Activated CD8-positive, alpha-beta T cell treated with anti-CD3 and anti-CD28 coated beads, Interleukin-2, amount 10 ng/mL, durations not matched to agents 7 days and 5 days (primary cell): ENCODE measurements at regions of chr2 and their contacts with region 1.

Region 1: DNA sequence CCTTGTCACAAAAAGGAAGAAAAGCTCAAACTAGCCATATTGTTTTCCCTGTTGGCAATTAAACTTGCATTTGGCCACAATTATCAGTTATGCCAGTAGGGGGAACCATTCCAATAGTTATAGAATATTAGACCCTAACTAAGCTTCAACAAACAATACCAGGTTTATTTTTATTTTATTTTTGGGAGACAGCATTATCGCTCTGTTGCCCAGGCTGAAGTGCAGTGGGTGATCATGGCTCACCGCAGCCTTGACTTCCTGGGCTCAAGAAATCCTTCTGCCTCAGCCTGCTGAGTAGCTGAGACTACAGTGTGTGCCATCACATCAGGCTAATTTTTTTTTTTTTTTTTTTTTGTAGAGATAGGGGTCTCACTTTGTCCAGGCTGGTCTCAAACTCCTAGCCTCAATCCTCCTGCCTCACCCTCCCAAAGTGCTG is 102.1 kb downstream of the ATAD2B start:
- DNase-seq: peak; percentile 59
- ATAC-seq: peak; percentile 67
- H3K4me3 Mint-ChIP-seq: no peak overlapping the region
- H3K27ac Mint-ChIP-seq: no peak overlapping the region
- H3K4me1 Mint-ChIP-seq: no peaks in the 10 kb centered on the region
- H3K27me3 Mint-ChIP-seq: no peaks in the 10 kb centered on the region

Region 2: DNA sequence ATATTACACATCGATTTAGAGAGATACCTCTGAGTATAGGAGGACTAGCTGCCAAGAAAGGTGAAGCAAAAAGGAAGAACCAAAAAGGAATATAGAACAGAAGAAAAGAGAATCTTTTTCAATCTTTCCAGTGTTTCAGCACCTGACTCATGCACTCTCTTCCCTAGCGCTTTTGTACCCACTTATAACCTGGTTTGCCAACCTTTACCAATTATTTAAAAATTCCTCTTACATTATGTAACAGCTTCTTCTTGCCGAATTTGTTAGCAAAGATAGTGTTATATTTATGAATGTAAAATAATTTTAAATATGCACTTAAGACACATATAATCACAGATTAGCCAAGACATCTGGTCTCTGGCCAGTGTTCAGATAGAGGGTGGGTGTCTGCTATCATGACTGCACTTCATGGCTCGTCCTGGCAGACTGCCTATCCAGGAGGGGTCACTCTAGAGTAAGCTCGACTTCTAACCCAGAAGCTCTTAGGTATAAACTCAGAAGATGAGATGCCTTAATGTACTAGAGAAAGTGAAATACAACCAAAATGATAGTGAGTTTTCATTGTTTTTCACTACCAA is 20.7 kb before region 1 on chr2:
- CTCF ChIA-PET with region 1: interaction called, 12 read pairs
- POLR2A ChIA-PET with region 1: interaction called, 4 read pairs
- DNase-seq: no peak
- ATAC-seq: no peak
- H3K4me3 Mint-ChIP-seq: no peak overlapping the region
- H3K27ac Mint-ChIP-seq: no peak overlapping the region
- H3K4me1 Mint-ChIP-seq: no peaks in the 10 kb centered on the region
- H3K27me3 Mint-ChIP-seq: no peaks in the 10 kb centered on the region

Region 3: GRCh38 chr2:23835988-23836387 is 11.2 kb after region 1 on chr2:
- CTCF ChIA-PET with region 1: interaction called, 20 read pairs
- POLR2A ChIA-PET with region 1: no interaction called
- DNase-seq: no peak
- ATAC-seq: no peak
- H3K4me3 Mint-ChIP-seq: no peak overlapping the region
- H3K27ac Mint-ChIP-seq: no peak overlapping the region
- H3K4me1 Mint-ChIP-seq: no peaks in the 10 kb centered on the region
- H3K27me3 Mint-ChIP-seq: no peaks in the 10 kb centered on the region

Region 4: GRCh38 chr2:23926750-23927571 is 102.2 kb after region 1 on chr2 and contains the start of gene ATAD2B:
- CTCF ChIA-PET with region 1: interaction called, 83 read pairs
- POLR2A ChIA-PET with region 1: interaction called, 21 read pairs
- DNase-seq: peak; percentile 94
- ATAC-seq: peak; percentile 89
- H3K4me3 Mint-ChIP-seq: peak within 1 kb of the TSS; percentile 98
- H3K27ac Mint-ChIP-seq: peak within 1 kb of the TSS; percentile 99
- H3K4me1 Mint-ChIP-seq: peaks cover 39% of the 10 kb centered on the region
- H3K27me3 Mint-ChIP-seq: no peaks in the 10 kb centered on the region
- total RNA-seq, gene ATAD2B: 28.2 to 32.0 TPM

Region 5: GRCh38 chr2:24084386-24085361 is 259.9 kb after region 1 on chr2 and contains the start of gene TP53I3:
- CTCF ChIA-PET with region 1: interaction called, 39 read pairs
- POLR2A ChIA-PET with region 1: interaction called, 7 read pairs
- DNase-seq: peak; percentile 84
- ATAC-seq: peak; percentile 97
- H3K4me3 Mint-ChIP-seq: peak within 1 kb of the TSS; percentile 88
- H3K27ac Mint-ChIP-seq: peak within 1 kb of the TSS; percentile 92
- H3K4me1 Mint-ChIP-seq: peaks cover 19% of the 10 kb centered on the region
- H3K27me3 Mint-ChIP-seq: no peaks in the 10 kb centered on the region
- total RNA-seq, gene TP53I3: 5.3 to 6.5 TPM

Region 6: GRCh38 chr2:24164125-24164973 is 339.6 kb after region 1 on chr2:
- CTCF ChIA-PET with region 1: interaction called, 14 read pairs
- POLR2A ChIA-PET with region 1: interaction called, 3 read pairs
- DNase-seq: peak; percentile 63
- ATAC-seq: peak; percentile 88
- H3K4me3 Mint-ChIP-seq: no peak overlapping the region
- H3K27ac Mint-ChIP-seq: no peak overlapping the region
- H3K4me1 Mint-ChIP-seq: no peaks in the 10 kb centered on the region
- H3K27me3 Mint-ChIP-seq: peaks cover 5% of the 10 kb centered on the region

Region 7: DNA sequence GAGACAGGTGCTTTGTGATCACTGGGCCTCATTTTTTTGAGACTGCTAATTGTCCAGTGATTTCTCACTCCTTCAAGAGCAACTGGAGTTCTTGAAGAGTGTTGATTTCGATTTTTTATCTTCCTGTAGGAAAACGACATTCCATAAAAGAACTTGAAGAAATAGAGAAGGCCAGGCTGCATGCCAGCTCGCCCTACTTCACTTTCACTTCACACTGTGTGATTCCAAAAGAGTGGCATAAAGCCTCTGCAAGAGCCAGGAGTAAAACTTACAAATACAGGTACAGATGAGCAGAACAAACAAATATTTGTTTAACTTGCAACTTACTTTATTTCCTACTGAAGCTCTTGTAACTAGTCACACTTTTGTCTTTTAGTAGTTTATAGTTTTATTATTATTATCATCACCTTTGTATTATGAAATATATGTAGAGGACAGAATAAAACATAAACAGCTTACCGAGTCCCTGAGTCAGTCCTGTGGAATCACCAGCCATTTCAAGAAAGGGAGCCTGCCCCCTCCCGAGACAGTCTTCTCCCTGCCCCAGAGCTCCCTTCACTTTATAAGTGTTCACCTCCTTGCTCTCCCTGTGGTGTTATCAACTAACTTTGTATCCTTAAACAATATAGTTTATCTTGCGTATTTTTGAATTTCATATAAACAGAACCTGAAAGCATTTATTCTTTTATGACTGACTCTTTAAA is 358.7 kb after region 1 on chr2:
- CTCF ChIA-PET with region 1: no interaction called
- POLR2A ChIA-PET with region 1: no interaction called
- DNase-seq: no peak
- ATAC-seq: no peak
- H3K4me3 Mint-ChIP-seq: no peak overlapping the region
- H3K27ac Mint-ChIP-seq: no peak overlapping the region
- H3K4me1 Mint-ChIP-seq: peaks cover 6% of the 10 kb centered on the region
- H3K27me3 Mint-ChIP-seq: peaks cover 13% of the 10 kb centered on the region